B cell (primary cell): ENCODE measurements at regions of chr3 and their contacts with region 1.

Region 1: DNA sequence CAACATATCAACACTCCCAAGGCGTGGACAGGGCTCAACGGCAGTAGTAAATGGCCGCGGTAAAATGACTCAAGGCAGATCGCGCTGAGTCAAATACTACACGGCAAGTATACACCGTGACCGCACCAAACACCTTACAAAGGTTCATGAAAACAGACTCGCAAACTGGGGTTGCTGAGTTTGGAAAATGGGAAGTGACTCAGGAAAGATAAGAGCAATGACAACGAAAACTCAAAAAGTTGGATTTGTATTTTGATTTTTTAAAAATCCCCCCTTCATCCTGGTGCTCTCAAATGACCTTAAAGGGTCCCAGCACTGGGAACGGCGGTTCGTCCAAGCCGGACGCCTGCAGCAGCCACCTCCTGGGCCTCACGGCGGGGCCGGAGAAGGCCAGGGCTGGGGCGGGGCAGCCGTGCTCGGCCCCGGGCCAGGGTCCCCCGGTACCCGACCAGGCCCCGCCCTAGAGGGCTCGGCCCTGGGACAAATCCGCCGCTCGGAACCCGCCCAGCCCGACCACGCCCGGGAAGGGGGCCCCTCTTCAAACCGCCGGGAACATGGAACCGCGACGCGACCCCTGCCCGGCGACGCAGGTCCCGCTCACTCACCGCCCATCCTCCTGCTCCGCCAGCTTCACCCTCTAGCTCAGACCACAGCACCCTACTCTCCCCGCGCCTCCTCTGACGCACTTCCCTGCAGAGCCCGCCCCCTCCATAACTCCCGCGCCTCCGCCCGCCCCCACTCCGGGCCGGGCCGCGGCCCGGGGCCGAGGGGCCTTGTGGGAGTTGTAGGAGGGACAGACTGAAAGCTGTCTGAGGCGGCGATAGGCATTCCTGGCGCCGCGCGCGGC is at the start of gene CLDND1:
- DNase-seq: peak; percentile 96
- ATAC-seq: peak; percentile 98
- H3K4me3 ChIP-seq: peak within 1 kb of the TSS; percentile 57 to 88 (median 84)
- H3K4me3 Mint-ChIP-seq: peak within 1 kb of the TSS; percentile 97
- H3K27ac ChIP-seq: peak within 1 kb of the TSS; percentile 76 to 84
- H3K27ac Mint-ChIP-seq: peak within 1 kb of the TSS; percentile 93
- H3K4me1 ChIP-seq: peaks cover 13 to 15% of the 10 kb centered on the region in 2 donors
- H3K4me1 Mint-ChIP-seq: peaks cover 37% of the 10 kb centered on the region
- H3K27me3 ChIP-seq: peaks cover 0 to 3% (median 0%) of the 10 kb centered on the region in 4 experiments
- H3K27me3 Mint-ChIP-seq: no peaks in the 10 kb centered on the region
- CTCF ChIP-seq: no peak
- total RNA-seq, gene CLDND1: 132 and 134 TPM in 2 replicates

Region 2: GRCh38 chr3:97059168-97059567 is 1463.3 kb before region 1 on chr3:
- CTCF ChIA-PET with region 1: no interaction called
- POLR2A ChIA-PET with region 1: no interaction called
- intact Hi-C with region 1: no loop called
- DNase-seq: no peak
- ATAC-seq: no peak
- H3K4me3 ChIP-seq: no peak overlapping the region
- H3K4me3 Mint-ChIP-seq: no peak overlapping the region
- H3K27ac ChIP-seq: no peak overlapping the region
- H3K27ac Mint-ChIP-seq: no peak overlapping the region
- H3K4me1 ChIP-seq: no peaks in the 10 kb centered on the region
- H3K4me1 Mint-ChIP-seq: no peaks in the 10 kb centered on the region
- H3K27me3 ChIP-seq: no peaks in the 10 kb centered on the region
- H3K27me3 Mint-ChIP-seq: no peaks in the 10 kb centered on the region
- CTCF ChIP-seq: no peak

Region 3: DNA sequence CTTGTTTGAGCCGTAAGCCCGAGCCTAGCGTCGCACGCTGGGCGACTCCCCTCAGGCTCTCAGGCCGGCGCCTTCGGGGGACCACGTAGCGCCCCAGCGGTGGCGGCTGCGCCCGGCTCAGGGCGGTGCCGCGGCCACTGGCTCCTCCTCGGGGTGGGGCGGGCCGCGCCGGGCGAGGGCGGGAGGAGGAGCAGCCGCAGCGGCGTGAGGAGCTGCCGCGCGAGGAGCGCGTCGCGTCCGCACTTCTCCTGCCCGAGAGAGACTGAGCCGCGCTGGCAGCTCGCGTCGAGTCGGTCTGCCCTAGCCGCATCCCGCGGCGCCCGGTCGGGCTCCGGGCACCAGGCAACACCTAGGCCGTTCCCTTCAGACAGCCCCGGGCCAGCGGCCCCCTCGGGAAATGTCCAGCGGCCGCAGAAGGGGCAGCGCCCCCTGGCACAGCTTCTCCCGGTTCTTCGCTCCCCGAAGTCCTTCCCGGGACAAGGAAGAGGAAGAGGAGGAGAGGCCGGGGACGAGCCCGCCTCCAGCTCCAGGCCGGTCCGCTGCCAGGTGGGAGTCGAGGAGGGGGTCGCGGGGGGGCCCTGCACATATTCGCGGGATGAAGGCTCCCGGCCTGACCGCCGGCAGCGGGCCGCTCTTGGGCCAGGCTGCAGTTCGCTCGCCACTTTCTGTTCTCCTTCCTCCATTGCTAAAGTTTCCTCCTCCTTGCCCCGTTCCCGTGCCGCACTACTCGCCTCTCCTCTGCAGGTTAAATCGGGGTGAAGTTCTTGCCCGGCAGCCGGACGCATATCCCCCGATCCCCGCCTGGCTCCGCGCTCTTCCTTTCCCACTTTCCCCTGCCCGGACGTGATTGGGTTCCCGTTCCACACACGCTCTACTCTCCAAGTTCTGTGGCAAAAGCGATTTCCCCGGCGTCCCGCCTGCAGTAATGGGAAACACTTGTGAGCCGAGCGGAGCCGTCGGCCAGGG is 700.4 kb before region 1 on chr3 and contains the start of gene CRYBG3:
- CTCF ChIA-PET with region 1: no interaction called
- POLR2A ChIA-PET with region 1: no interaction called
- intact Hi-C with region 1: loop called (anchors 5 kb)
- DNase-seq: peak; percentile 87
- ATAC-seq: peak; percentile 99
- H3K4me3 ChIP-seq: peak within 1 kb of the TSS; percentile 65 to 93 (median 70)
- H3K4me3 Mint-ChIP-seq: peak within 1 kb of the TSS; percentile 95
- H3K27ac ChIP-seq: peak within 1 kb of the TSS in 1 of 2 donors; percentile 22
- H3K27ac Mint-ChIP-seq: peak within 1 kb of the TSS; percentile 85
- H3K4me1 ChIP-seq: peaks cover 15 to 17% of the 10 kb centered on the region in 2 donors
- H3K4me1 Mint-ChIP-seq: peaks cover 24% of the 10 kb centered on the region
- H3K27me3 ChIP-seq: peaks cover 0 to 26% (median 15%) of the 10 kb centered on the region in 4 experiments
- H3K27me3 Mint-ChIP-seq: peaks cover 55% of the 10 kb centered on the region
- CTCF ChIP-seq: no peak
- total RNA-seq, gene CRYBG3: 2.0 and 2.2 TPM in 2 replicates

Region 4: GRCh38 chr3:98039322-98040024 is 483.0 kb before region 1 on chr3:
- CTCF ChIA-PET with region 1: no interaction called
- POLR2A ChIA-PET with region 1: no interaction called
- intact Hi-C with region 1: loop called (anchors 5 kb)
- DNase-seq: peak; percentile 87
- ATAC-seq: peak; percentile 97
- H3K4me3 ChIP-seq: peak overlapping the region in 4 of 5 experiments; percentile 23 to 58 (median 42)
- H3K4me3 Mint-ChIP-seq: peak overlapping the region; percentile 85
- H3K27ac ChIP-seq: no peak overlapping the region
- H3K27ac Mint-ChIP-seq: peak overlapping the region; percentile 59
- H3K4me1 ChIP-seq: peaks cover 0 to 5% of the 10 kb centered on the region in 2 donors
- H3K4me1 Mint-ChIP-seq: peaks cover 5% of the 10 kb centered on the region
- H3K27me3 ChIP-seq: peaks cover 0 to 4% (median 0%) of the 10 kb centered on the region in 4 experiments
- H3K27me3 Mint-ChIP-seq: peaks cover 27% of the 10 kb centered on the region
- CTCF ChIP-seq: peak; percentile 98

Region 5: GRCh38 chr3:98291332-98291957 is 231.0 kb before region 1 on chr3:
- CTCF ChIA-PET with region 1: no interaction called
- POLR2A ChIA-PET with region 1: no interaction called
- intact Hi-C with region 1: no loop called
- DNase-seq: no peak
- ATAC-seq: no peak
- H3K4me3 ChIP-seq: no peak overlapping the region
- H3K4me3 Mint-ChIP-seq: no peak overlapping the region
- H3K27ac ChIP-seq: no peak overlapping the region
- H3K27ac Mint-ChIP-seq: no peak overlapping the region
- H3K4me1 ChIP-seq: no peaks in the 10 kb centered on the region
- H3K4me1 Mint-ChIP-seq: no peaks in the 10 kb centered on the region
- H3K27me3 ChIP-seq: peaks cover 0 to 4% (median 0%) of the 10 kb centered on the region in 4 experiments
- H3K27me3 Mint-ChIP-seq: no peaks in the 10 kb centered on the region
- CTCF ChIP-seq: no peak

Region 6: GRCh38 chr3:98504539-98504938 is 17.9 kb before region 1 on chr3:
- CTCF ChIA-PET with region 1: no interaction called
- POLR2A ChIA-PET with region 1: no interaction called
- intact Hi-C with region 1: no loop called
- DNase-seq: no peak
- ATAC-seq: no peak
- H3K4me3 ChIP-seq: no peak overlapping the region
- H3K4me3 Mint-ChIP-seq: no peak overlapping the region
- H3K27ac ChIP-seq: no peak overlapping the region
- H3K27ac Mint-ChIP-seq: no peak overlapping the region
- H3K4me1 ChIP-seq: no peaks in the 10 kb centered on the region
- H3K4me1 Mint-ChIP-seq: no peaks in the 10 kb centered on the region
- H3K27me3 ChIP-seq: no peaks in the 10 kb centered on the region
- H3K27me3 Mint-ChIP-seq: no peaks in the 10 kb centered on the region
- CTCF ChIP-seq: no peak

Region 7: GRCh38 chr3:98573181-98573728 is 50.8 kb after region 1 on chr3:
- CTCF ChIA-PET with region 1: no interaction called
- POLR2A ChIA-PET with region 1: no interaction called
- intact Hi-C with region 1: loop called (anchors 5 kb)
- DNase-seq: peak; percentile 37
- ATAC-seq: peak; percentile 36
- H3K4me3 ChIP-seq: no peak overlapping the region
- H3K4me3 Mint-ChIP-seq: no peak overlapping the region
- H3K27ac ChIP-seq: no peak overlapping the region
- H3K27ac Mint-ChIP-seq: peak overlapping the region; percentile 3
- H3K4me1 ChIP-seq: no peaks in the 10 kb centered on the region
- H3K4me1 Mint-ChIP-seq: peaks cover 3% of the 10 kb centered on the region
- H3K27me3 ChIP-seq: no peaks in the 10 kb centered on the region
- H3K27me3 Mint-ChIP-seq: no peaks in the 10 kb centered on the region
- CTCF ChIP-seq: peak; percentile 69

Region 8: DNA sequence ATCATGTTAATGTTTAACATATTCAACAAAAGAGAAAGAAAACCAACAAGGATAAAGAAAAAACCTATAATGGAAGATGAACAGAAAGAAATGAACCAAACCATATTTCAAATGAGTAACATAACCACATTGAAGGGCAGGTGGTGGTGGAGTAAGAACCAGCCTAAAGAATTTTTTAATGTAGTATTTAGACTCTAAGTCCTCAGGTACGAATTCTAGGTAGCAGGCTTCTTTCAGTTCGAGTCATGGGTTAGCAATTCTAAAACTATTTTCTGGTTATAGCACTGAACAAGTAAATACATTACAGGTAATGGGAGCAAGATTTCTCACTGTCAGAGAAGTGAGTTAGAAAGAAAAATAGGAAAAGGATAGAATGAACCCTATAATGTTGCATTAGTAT is 354.7 kb after region 1 on chr3:
- CTCF ChIA-PET with region 1: no interaction called
- POLR2A ChIA-PET with region 1: no interaction called
- intact Hi-C with region 1: no loop called
- DNase-seq: no peak
- ATAC-seq: no peak
- H3K4me3 ChIP-seq: no peak overlapping the region
- H3K4me3 Mint-ChIP-seq: no peak overlapping the region
- H3K27ac ChIP-seq: no peak overlapping the region
- H3K27ac Mint-ChIP-seq: no peak overlapping the region
- H3K4me1 ChIP-seq: no peaks in the 10 kb centered on the region
- H3K4me1 Mint-ChIP-seq: no peaks in the 10 kb centered on the region
- H3K27me3 ChIP-seq: no peaks in the 10 kb centered on the region
- H3K27me3 Mint-ChIP-seq: no peaks in the 10 kb centered on the region
- CTCF ChIP-seq: no peak

Region 9: GRCh38 chr3:99817437-99818240 is 1295.2 kb after region 1 on chr3 and contains the start of gene CMSS1:
- CTCF ChIA-PET with region 1: no interaction called
- POLR2A ChIA-PET with region 1: no interaction called
- intact Hi-C with region 1: loop called (anchors 5 kb)
- DNase-seq: peak; percentile 98
- ATAC-seq: peak; percentile 91
- H3K4me3 ChIP-seq: peak within 1 kb of the TSS; percentile 71 to 99 (median 89)
- H3K4me3 Mint-ChIP-seq: peak within 1 kb of the TSS; percentile 99
- H3K27ac ChIP-seq: peak within 1 kb of the TSS; percentile 85 to 91
- H3K27ac Mint-ChIP-seq: peak within 1 kb of the TSS; percentile 100
- H3K4me1 ChIP-seq: peaks cover 16 to 17% of the 10 kb centered on the region in 2 donors
- H3K4me1 Mint-ChIP-seq: peaks cover 39% of the 10 kb centered on the region
- H3K27me3 ChIP-seq: no peaks in the 10 kb centered on the region
- H3K27me3 Mint-ChIP-seq: no peaks in the 10 kb centered on the region
- CTCF ChIP-seq: no peak
- total RNA-seq, gene CMSS1: 22.0 and 22.8 TPM in 2 replicates